Psoas muscle (tissue), 8 donors: ENCODE measurements at regions of chr17 and their contacts with region 1.

Region 1: GRCh38 chr17:27293898-27294688 is at the start of gene WSB1:
- DNase-seq: peak; percentile 93 to 96
- ATAC-seq: peak; percentile 96 to 97 (median 97)
- H3K4me3 ChIP-seq: peak within 1 kb of the TSS; percentile 90
- H3K27ac ChIP-seq: peak within 1 kb of the TSS; percentile 96
- H3K4me1 ChIP-seq: peaks cover 29% of the 10 kb centered on the region
- H3K27me3 ChIP-seq: no peaks in the 10 kb centered on the region
- CTCF ChIP-seq: no peak
- total RNA-seq, gene WSB1: 35.3 to 42.8 (median 39.5) TPM

Region 2: GRCh38 chr17:27199948-27200347 is 94.1 kb before region 1 on chr17:
- intact Hi-C with region 1: no loop called
- DNase-seq: no peak
- ATAC-seq: no peak
- H3K4me3 ChIP-seq: no peak overlapping the region
- H3K27ac ChIP-seq: no peak overlapping the region
- H3K4me1 ChIP-seq: no peaks in the 10 kb centered on the region
- H3K27me3 ChIP-seq: no peaks in the 10 kb centered on the region
- CTCF ChIP-seq: no peak

Region 3: DNA sequence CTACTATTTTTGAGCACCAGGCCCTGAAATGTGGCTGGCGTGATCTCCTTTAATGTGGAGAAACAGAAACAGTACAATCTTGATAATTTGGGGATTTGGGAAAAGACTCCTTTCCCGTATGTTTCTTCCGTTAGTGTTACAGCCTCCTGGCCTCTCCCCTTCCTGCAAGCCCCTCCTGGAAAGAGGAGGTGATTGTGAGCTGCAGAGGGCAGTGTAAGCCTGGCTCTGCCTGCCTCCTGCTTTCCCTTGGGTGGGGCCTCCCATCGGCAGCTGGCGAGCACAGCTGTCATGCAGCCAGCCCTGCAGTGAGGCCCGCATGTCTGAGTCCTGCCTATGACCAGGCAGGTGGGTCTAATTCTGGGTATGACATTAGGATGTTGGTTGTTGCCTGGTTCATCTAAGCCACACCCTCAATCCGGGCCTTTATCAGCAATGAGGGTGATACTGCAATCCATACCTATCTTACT is 48.8 kb before region 1 on chr17:
- intact Hi-C with region 1: loop called (anchors 5 kb)
- DNase-seq: peak; percentile 87 to 92
- ATAC-seq: peak; percentile 92 to 97 (median 96)
- H3K4me3 ChIP-seq: peak overlapping the region; percentile 43
- H3K27ac ChIP-seq: peak overlapping the region; percentile 89
- H3K4me1 ChIP-seq: peaks cover 34% of the 10 kb centered on the region
- H3K27me3 ChIP-seq: no peaks in the 10 kb centered on the region
- CTCF ChIP-seq: peak; percentile 66

Region 4: DNA sequence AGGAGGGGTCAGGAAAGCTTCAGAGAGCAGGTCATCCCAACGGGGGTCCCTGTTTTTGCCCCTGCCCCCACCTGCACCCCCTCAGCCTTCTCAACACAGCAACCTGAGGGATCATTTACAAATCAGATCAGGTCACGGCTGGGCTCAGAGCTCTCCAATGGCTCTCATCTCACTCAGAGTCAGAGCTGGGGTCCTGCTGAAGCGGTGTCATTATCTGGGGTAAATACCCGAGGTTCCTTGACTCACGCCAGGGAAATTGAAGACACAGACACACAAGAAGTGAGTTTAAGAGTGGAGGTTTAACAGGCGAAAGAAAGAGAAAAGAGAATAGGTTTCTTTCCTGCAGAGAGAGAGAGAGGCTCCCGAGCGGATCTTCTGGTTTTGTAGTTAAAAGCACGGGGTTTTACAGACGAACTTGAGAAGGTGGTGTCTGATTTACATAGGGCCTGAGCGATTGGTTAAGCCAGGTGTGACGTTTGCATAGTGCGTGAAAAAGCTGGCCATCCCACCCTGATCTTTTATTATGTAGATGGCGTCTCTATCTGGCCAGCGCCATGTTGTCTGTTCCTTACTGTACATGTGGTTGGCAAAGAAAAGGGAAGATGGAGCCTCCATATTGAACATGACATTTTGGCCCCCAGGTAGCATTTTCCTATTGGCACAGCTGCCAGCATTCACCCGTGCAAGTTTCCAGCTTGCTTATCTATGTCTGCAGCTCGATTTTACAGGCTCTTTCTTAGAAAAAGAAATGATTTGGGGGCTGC is 51.2 kb after region 1 on chr17:
- intact Hi-C with region 1: loop called in 1 of 2 experiments (anchors 10 kb)
- DNase-seq: no peak
- ATAC-seq: no peak
- H3K4me3 ChIP-seq: no peak overlapping the region
- H3K27ac ChIP-seq: no peak overlapping the region
- H3K4me1 ChIP-seq: peaks cover 14% of the 10 kb centered on the region
- H3K27me3 ChIP-seq: no peaks in the 10 kb centered on the region
- CTCF ChIP-seq: no peak

Region 5: GRCh38 chr17:27455914-27456680 is 162.0 kb after region 1 on chr17 and contains the start of gene KSR1:
- intact Hi-C with region 1: loop called in 1 of 2 experiments (anchors 5 kb)
- DNase-seq: peak; percentile 85 to 87
- ATAC-seq: peak; percentile 94 to 96 (median 96)
- H3K4me3 ChIP-seq: peak within 1 kb of the TSS; percentile 87
- H3K27ac ChIP-seq: peak within 1 kb of the TSS; percentile 74
- H3K4me1 ChIP-seq: peaks cover 7% of the 10 kb centered on the region
- H3K27me3 ChIP-seq: no peaks in the 10 kb centered on the region
- CTCF ChIP-seq: peak; percentile 14
- total RNA-seq, gene KSR1: 46.5 to 93.0 (median 70.7) TPM